Left ventricle myocardium inferior (tissue), 1 donor: ENCODE measurements at regions of chr10 and their contacts with region 1.

Region 1: DNA sequence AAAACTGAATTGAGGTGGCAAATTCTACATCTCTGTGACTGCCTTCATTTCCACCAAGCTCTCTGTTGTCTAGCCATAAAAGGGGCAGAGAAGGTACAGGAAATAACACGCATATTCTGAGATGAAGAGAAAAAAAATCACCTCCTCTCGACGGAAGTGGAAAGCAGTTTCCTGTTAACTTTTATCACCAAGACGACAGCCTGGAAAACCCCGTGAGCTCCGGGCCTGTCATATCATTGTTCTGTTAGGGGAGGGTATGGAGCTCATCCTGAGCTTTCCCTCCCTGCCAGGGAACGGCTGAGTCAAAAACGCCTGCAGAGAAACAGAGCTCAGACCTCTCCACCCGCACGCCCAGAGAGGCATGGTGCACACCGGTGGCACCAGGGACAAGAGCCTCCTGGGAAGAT is 200.3 kb downstream of the PRPF18 start:
- DNase-seq: no peak
- H3K4me3 ChIP-seq: no peak overlapping the region
- H3K27ac ChIP-seq: peak overlapping the region; percentile 60
- H3K4me1 ChIP-seq: peaks cover 61% of the 10 kb centered on the region
- H3K27me3 ChIP-seq: no peaks in the 10 kb centered on the region
- CTCF ChIP-seq: no peak

Region 2: DNA sequence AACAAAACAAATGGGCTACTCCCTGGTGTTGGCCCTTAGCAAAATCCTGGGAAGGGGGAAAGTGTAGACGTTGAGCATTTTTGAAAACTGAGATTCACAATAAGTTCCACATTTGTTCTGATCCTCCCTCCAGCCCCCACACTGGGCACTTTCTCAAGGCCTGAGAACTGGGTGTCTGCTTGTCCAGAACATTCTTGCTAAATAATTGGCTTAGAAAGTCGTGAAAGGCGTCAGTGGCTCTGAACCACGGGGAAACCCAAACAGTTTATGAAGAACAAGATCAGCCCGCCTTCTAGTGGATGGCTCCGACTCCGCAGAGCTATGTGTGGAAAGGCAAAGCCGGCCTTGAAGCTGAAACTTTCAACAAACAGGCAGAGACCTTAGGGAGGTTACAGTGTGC is 169.8 kb after region 1 on chr10:
- intact Hi-C with region 1: loop called (anchors 10 kb)
- DNase-seq: peak; percentile 74
- H3K4me3 ChIP-seq: no peak overlapping the region
- H3K27ac ChIP-seq: peak overlapping the region; percentile 68
- H3K4me1 ChIP-seq: peaks cover 25% of the 10 kb centered on the region
- H3K27me3 ChIP-seq: no peaks in the 10 kb centered on the region
- CTCF ChIP-seq: peak; percentile 61

Region 3: DNA sequence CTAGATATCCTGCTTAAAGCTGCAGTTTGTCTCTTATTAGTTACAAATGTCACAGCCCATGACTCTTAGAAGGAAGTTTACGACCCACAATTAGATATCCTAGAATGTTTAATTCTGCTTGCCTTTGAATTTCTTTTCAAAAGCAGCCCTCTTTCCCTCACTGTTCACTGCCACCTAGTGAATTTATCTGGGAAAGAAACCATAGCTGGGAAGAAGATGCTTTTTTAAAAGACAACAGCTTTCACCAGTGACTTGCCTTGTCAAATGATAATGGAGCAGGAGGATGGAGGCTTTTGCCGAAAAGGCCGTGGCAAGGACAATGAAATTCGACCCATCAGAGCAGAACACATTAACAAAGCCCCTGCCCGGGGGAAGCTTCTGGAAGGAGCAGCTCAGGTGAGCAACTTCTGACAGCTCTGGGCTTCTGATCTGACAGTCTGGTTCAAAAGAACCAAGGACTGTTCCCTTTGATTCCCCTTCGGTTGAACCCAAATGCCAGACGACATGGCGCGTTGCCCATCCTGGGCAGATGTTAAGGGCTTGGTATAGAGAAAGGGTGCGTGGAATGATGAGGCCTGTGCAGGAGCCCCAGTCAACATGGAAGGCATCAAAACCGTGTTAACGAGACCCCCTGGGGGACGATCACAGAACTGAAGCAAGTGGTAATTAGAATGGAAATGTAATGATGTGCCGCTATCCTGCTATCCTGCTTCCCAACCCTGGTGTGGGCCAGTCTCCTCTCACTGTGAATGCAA is 306.9 kb after region 1 on chr10:
- intact Hi-C with region 1: loop called (anchors 5 kb)
- DNase-seq: no peak
- H3K4me3 ChIP-seq: no peak overlapping the region
- H3K27ac ChIP-seq: no peak overlapping the region
- H3K4me1 ChIP-seq: peaks cover 11% of the 10 kb centered on the region
- H3K27me3 ChIP-seq: no peaks in the 10 kb centered on the region
- CTCF ChIP-seq: peak; percentile 73